ENCODE measurements at regions of chrX and their contacts with region 1.

Region 1: DNA sequence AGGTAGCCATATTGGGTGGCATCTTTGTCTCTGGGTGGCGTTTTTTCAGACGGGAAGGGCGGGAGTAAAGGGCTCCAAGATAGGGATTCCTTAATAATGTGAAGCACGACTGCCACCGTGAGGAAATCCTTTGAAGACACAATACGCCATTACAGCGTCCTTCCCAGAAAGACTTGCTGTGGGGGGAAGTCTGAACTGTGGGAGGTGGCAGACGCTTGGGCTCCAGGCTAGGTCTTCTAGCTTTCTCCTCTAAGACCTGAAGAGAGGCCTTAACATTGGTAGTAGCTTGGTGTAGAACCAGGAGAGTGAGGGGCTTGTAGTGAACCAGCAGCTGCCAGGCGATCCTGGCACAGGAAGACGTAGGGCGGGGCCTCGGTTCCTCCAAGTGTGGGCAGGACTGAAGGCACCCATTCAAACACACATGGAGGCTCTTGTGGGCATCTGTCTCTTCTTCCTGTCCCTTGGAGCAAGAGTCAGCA is 197.3 kb downstream of the OR13H1 start:
- DNase-seq: peak; percentile 79
- H3K4me3 ChIP-seq: no peak overlapping the region
- H3K27ac ChIP-seq: no peak overlapping the region
- H3K4me1 ChIP-seq: no peaks in the 10 kb centered on the region
- H3K27me3 ChIP-seq: no peaks in the 10 kb centered on the region
- CTCF ChIP-seq: no peak

Region 2: GRCh38 chrX:131671735-131672134 is 69.4 kb before region 1 on chrX:
- CTCF ChIA-PET with region 1: no interaction called
- dilution Hi-C with region 1: no loop called
- in situ Hi-C with region 1: no loop called
- intact Hi-C with region 1: no loop called
- DNase-seq: no peak
- H3K4me3 ChIP-seq: no peak overlapping the region
- H3K27ac ChIP-seq: no peak overlapping the region
- H3K4me1 ChIP-seq: no peaks in the 10 kb centered on the region
- H3K27me3 ChIP-seq: no peaks in the 10 kb centered on the region
- CTCF ChIP-seq: no peak

Region 3: GRCh38 chrX:131812836-131813825 is 72.0 kb after region 1 on chrX:
- CTCF ChIA-PET with region 1: no interaction called
- dilution Hi-C with region 1: no loop called
- in situ Hi-C with region 1: no loop called
- intact Hi-C with region 1: loop called (anchors 1 kb)
- DNase-seq: peak; percentile 79
- H3K4me3 ChIP-seq: peak overlapping the region; percentile 24 to 43 (median 39)
- H3K27ac ChIP-seq: no peak overlapping the region
- H3K4me1 ChIP-seq: no peaks in the 10 kb centered on the region
- H3K27me3 ChIP-seq: no peaks in the 10 kb centered on the region
- CTCF ChIP-seq: peak; percentile 18 to 49